Activated T-helper 2 cell treated with anti-CD3 and anti-CD28 coated beads, Interferon-gamma antibody, Interleukin-2, Interleukin-4, amounts not matched to agents 10 μg/mL and 5 μg/mL and 100 μg/mL, durations not matched to agents 14 hours and 24 hours and 36 hours (primary cell): ENCODE measurements at regions of chrX and their contacts with region 1.

Region 1: GRCh38 chrX:54439967-54440871 is at the start of gene TSR2:
- DNase-seq: peak; percentile 72
- H3K4me3 Mint-ChIP-seq: peak within 1 kb of the TSS; percentile 96
- H3K27ac Mint-ChIP-seq: peak within 1 kb of the TSS; percentile 87
- H3K4me1 Mint-ChIP-seq: peaks cover 13% of the 10 kb centered on the region
- H3K27me3 Mint-ChIP-seq: no peaks in the 10 kb centered on the region
- total RNA-seq, gene TSR2: 36.8 and 37.7 TPM in 2 replicates

Region 2: GRCh38 chrX:54182864-54183608 is 257.2 kb before region 1 on chrX and contains the start of gene FAM120C:
- intact Hi-C with region 1: loop called (anchors 1 kb)
- DNase-seq: peak; percentile 50
- H3K4me3 Mint-ChIP-seq: peak within 1 kb of the TSS; percentile 86
- H3K27ac Mint-ChIP-seq: peak within 1 kb of the TSS; percentile 81
- H3K4me1 Mint-ChIP-seq: peaks cover 39% of the 10 kb centered on the region
- H3K27me3 Mint-ChIP-seq: no peaks in the 10 kb centered on the region
- total RNA-seq, gene FAM120C: 10.0 and 10.6 TPM in 2 replicates

Region 3: DNA sequence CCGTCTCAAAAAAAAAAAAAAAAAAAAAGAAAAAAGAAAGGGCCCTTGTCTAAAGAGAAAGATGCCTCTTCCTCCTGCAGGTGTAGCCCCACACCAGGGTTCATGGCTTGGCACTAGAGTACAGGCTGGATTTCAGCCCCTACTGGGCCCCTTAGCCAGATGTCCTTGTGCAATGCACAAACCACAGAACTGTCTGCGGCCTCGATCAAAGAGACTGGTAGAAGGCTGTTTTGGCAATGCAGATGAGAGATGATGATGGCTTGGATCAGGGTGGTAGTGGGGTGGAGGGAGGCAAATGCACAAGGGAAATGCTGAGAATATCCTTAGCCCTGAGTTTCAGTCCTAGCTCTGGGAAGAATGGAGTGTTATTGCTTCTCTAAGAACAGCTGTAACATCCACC is 26.5 kb before region 1 on chrX:
- intact Hi-C with region 1: loop called (anchors 2 kb)
- DNase-seq: no peak
- H3K4me3 Mint-ChIP-seq: no peak overlapping the region
- H3K27ac Mint-ChIP-seq: no peak overlapping the region
- H3K4me1 Mint-ChIP-seq: peaks cover 12% of the 10 kb centered on the region
- H3K27me3 Mint-ChIP-seq: peaks cover 39% of the 10 kb centered on the region

Region 4: GRCh38 chrX:54529552-54530357 is 89.5 kb after region 1 on chrX and contains the start of gene GNL3L:
- intact Hi-C with region 1: loop called (anchors 5 kb)
- DNase-seq: peak; percentile 74
- H3K4me3 Mint-ChIP-seq: peak within 1 kb of the TSS; percentile 91
- H3K27ac Mint-ChIP-seq: peak within 1 kb of the TSS; percentile 95
- H3K4me1 Mint-ChIP-seq: peaks cover 24% of the 10 kb centered on the region
- H3K27me3 Mint-ChIP-seq: no peaks in the 10 kb centered on the region
- total RNA-seq, gene GNL3L: 63.6 and 64.5 TPM in 2 replicates